ENCODE measurements at regions of chr5 and their contacts with region 1.

Region 1: DNA sequence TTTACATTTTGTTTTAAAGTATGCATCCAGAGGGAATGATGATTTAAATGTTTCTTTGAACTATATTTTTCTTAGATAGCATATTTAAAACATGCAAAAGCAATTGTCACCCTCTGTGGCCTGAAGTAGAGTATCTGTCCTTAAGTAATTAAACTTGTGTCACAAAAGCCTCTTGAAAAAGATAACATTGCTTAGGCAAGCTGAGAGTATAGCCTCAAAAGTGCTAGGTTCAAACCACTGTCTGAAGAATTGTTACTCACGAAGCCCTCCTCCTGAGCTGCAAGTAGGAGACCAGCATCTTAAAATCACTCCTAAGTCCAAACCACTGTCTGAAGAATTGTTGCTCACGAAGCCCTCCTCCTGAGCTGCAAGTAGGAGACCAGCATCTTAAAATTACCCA is 378.0 kb upstream of the PRR16 start:
- DNase-seq: no peak

Region 2: DNA sequence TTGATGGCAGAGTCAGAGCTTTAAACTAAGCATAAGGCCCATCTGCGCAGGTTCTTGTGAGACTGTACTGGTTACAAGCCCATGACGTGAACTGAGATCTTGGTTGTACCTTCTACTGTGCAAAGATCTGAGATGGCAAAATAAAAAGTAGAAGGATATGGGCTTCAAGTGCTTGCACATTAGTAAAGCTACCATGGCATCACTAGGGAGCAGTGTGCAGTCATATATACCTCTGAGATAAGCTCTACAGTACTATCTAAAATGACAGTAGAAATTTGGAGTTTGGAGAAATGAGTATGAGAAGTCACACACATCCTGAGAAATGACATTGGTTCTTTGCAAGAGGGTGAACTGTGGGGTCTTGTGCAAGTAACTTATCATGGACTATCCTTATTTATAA is 30.2 kb before region 1 on chr5:
- intact Hi-C with region 1: loop called in 1 of 2 experiments (anchors 2 kb)
- DNase-seq: no peak

Measured in posterior vena cava (tissue), 2 donors.